ENCODE measurements at regions of chr14 and their contacts with region 1.

Region 1: GRCh38 chr14:57182760-57183503 is 85.8 kb downstream of the EXOC5 start:
- DNase-seq: no peak
- H3K4me3 Mint-ChIP-seq: no peak overlapping the region
- H3K27ac Mint-ChIP-seq: no peak overlapping the region
- H3K4me1 Mint-ChIP-seq: no peaks in the 10 kb centered on the region
- H3K27me3 Mint-ChIP-seq: peaks cover 14% of the 10 kb centered on the region

Region 2: DNA sequence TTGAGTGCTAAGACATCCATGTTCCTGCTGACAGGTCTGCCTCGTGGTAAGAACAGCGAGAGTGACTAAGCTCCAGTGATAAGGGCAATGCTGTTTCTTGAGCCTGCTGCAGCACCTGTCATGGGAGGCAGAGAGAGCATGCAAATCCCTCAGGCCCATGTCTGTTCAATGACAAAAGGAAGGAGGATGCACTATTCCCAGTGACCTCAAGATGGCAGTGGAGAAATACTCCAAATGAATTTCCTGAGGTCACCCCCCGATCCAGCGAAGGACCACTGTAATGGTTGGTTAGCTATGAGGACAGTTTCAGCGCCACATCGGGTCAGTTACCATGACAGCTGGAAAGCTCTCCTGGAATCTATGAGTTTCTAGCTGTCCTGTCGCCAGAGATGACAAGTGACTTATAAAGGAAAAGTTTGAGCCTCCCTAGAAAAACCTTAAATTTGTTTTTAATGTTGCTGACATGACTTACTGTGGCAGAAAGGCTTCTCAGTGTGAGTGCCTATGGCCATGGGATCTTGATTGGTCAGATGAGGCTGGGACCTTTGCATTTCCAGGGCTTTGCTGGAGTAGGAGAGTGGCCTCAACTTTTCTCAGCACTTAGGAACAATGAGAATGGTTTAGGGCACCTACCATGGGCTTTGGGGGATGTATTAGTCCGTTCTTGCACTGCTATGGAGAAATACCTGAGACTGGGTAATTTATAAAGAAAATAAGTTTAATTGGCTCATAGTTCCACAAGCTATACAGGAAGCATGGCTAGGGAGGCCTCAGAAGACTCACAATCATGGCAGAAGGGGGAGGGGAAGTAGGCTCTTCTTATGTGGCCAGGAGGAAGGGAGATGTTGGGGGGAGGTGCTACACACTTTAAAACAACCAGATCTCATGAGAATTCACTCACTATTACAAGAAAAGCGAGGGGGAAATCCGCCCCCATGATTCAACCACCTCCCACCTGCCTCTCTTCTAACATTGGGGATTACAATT is 691.3 kb before region 1 on chr14:
- intact Hi-C with region 1: loop called (anchors 5 kb)
- DNase-seq: peak; percentile 2
- H3K4me3 Mint-ChIP-seq: no peak overlapping the region
- H3K27ac Mint-ChIP-seq: no peak overlapping the region
- H3K4me1 Mint-ChIP-seq: peaks cover 7% of the 10 kb centered on the region
- H3K27me3 Mint-ChIP-seq: no peaks in the 10 kb centered on the region

Region 3: GRCh38 chr14:56659964-56660551 is 522.9 kb before region 1 on chr14:
- intact Hi-C with region 1: loop called (anchors 5 kb)
- DNase-seq: no peak
- H3K4me3 Mint-ChIP-seq: no peak overlapping the region
- H3K27ac Mint-ChIP-seq: no peak overlapping the region
- H3K4me1 Mint-ChIP-seq: no peaks in the 10 kb centered on the region
- H3K27me3 Mint-ChIP-seq: no peaks in the 10 kb centered on the region